GM12878 (cell line): ENCODE measurements at regions of chr22 and their contacts with region 1.

Region 1: GRCh38 chr22:41832553-41833368 is at the start of gene SREBF2:
- DNase-seq: peak; percentile 99
- ATAC-seq: peak; percentile 92
- H3K4me3 ChIP-seq: peak within 1 kb of the TSS; percentile 92
- H3K27ac ChIP-seq: peak within 1 kb of the TSS; percentile 95
- H3K4me1 ChIP-seq: peaks cover 12% of the 10 kb centered on the region
- H3K27me3 ChIP-seq: no peaks in the 10 kb centered on the region
- CTCF ChIP-seq: 0 out of 6 replicates have a peak, but pooled peaks of 1 of the 3 experiments have one; percentile 1
- EP300 ChIP-seq: peak; percentile 64 to 75
- POLR2A ChIP-seq: peak; percentile 94
- RAD21 ChIP-seq: no peak
- polyA plus RNA-seq, gene SREBF2: 2.4 to 3.6 TPM

Region 2: GRCh38 chr22:41800348-41801146 is 32.2 kb before region 1 on chr22 and contains the start of gene CCDC134:
- CTCF ChIA-PET with region 1: interaction called, 4 read pairs
- POLR2A ChIA-PET with region 1: interaction called, 26 read pairs
- RAD21 ChIA-PET with region 1: interaction called, 4 read pairs
- SMC1A ChIA-PET with region 1: interaction called, 7 read pairs
- in situ Hi-C with region 1: no loop called
- intact Hi-C with region 1: no loop called
- DNase-seq: peak; percentile 70
- ATAC-seq: peak; percentile 98
- H3K4me3 ChIP-seq: peak within 1 kb of the TSS; percentile 89
- H3K27ac ChIP-seq: peak within 1 kb of the TSS; percentile 82
- H3K4me1 ChIP-seq: peaks cover 19% of the 10 kb centered on the region
- H3K27me3 ChIP-seq: no peaks in the 10 kb centered on the region
- CTCF ChIP-seq: no peak
- EP300 ChIP-seq: no peak
- POLR2A ChIP-seq: peak; percentile 95
- RAD21 ChIP-seq: no peak
- polyA plus RNA-seq, gene CCDC134: 0.35 to 1.2 TPM

Region 3: DNA sequence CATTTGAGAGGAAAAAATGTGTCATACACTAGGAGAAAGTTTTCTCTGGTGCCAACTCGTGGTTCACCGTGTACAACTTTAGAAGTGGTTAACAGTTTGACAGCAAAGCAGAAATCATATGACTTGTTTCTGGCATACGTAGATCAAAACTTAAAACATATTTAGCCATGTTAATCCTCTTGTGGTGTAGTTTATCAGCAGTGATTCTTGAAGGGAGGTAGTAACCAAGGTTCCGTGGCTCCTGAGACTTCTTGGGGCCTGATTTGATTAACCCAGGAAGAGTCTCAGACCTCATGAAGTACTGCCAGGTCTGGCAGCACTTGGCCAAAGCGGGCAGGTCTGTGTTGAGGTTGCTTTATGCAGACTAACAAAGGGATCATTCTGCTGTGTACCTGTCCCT is 40.6 kb after region 1 on chr22:
- CTCF ChIA-PET with region 1: no interaction called
- POLR2A ChIA-PET with region 1: interaction called, 4 read pairs
- RAD21 ChIA-PET with region 1: interaction called, 3 read pairs
- SMC1A ChIA-PET with region 1: interaction called, 18 read pairs
- in situ Hi-C with region 1: no loop called
- intact Hi-C with region 1: no loop called
- DNase-seq: no peak
- ATAC-seq: peak; percentile 34
- H3K4me3 ChIP-seq: no peak overlapping the region
- H3K27ac ChIP-seq: no peak overlapping the region
- H3K4me1 ChIP-seq: no peaks in the 10 kb centered on the region
- H3K27me3 ChIP-seq: no peaks in the 10 kb centered on the region
- CTCF ChIP-seq: no peak
- EP300 ChIP-seq: no peak
- POLR2A ChIP-seq: no peak
- RAD21 ChIP-seq: no peak

Region 4: GRCh38 chr22:41902932-41903421 is 70.2 kb after region 1 on chr22:
- CTCF ChIA-PET with region 1: no interaction called
- POLR2A ChIA-PET with region 1: no interaction called
- RAD21 ChIA-PET with region 1: no interaction called
- SMC1A ChIA-PET with region 1: no interaction called
- in situ Hi-C with region 1: no loop called
- intact Hi-C with region 1: no loop called
- DNase-seq: no peak
- ATAC-seq: no peak
- H3K4me3 ChIP-seq: no peak overlapping the region
- H3K27ac ChIP-seq: no peak overlapping the region
- H3K4me1 ChIP-seq: peaks cover 4% of the 10 kb centered on the region
- H3K27me3 ChIP-seq: no peaks in the 10 kb centered on the region
- CTCF ChIP-seq: no peak
- EP300 ChIP-seq: no peak
- POLR2A ChIP-seq: peak; percentile 78
- RAD21 ChIP-seq: no peak

Region 5: GRCh38 chr22:41925655-41926460 is 93.1 kb after region 1 on chr22:
- CTCF ChIA-PET with region 1: interaction called, 7 read pairs
- POLR2A ChIA-PET with region 1: interaction called, 65 read pairs
- RAD21 ChIA-PET with region 1: interaction called, 7 read pairs
- SMC1A ChIA-PET with region 1: interaction called, 5 read pairs
- in situ Hi-C with region 1: no loop called
- intact Hi-C with region 1: loop called (anchors 5 kb)
- DNase-seq: no peak
- ATAC-seq: peak; percentile 59
- H3K4me3 ChIP-seq: peak overlapping the region; percentile 97
- H3K27ac ChIP-seq: peak overlapping the region; percentile 93
- H3K4me1 ChIP-seq: peaks cover 53% of the 10 kb centered on the region
- H3K27me3 ChIP-seq: no peaks in the 10 kb centered on the region
- CTCF ChIP-seq: peak; percentile 78 to 87 (median 79)
- EP300 ChIP-seq: no peak
- POLR2A ChIP-seq: peak; percentile 54; the same call in 1 of the 2 replicates
- RAD21 ChIP-seq: peak; percentile 50

Region 6: DNA sequence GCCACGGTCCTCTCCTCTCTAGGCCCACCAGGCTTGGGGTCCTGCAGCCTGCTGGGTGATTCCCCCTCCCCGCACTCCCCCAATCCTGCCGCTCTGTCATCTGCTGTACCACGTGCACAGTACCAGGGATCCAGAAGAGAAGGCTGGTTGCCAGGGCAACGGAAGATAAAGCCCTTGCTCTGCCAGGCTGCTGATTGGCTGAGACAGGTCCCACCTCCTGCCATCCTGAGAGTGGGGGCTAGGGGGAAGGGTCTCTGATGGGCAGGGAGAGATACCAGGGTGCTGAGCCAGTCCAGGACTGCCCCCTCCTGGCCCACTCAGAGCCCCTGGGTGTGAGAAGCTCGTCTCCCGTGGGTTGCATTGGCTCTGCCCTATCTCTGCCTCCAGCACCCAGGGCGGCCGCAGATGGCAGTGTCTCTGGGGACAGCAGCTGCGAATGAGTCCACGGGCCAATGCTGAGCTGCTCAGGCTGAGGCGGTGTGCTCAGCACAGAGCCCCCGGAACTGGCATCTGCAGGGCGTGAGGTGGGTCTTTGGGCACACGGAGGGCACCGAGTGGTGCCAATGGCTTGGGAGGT is 119.2 kb after region 1 on chr22 and contains the start of gene SMIM45:
- CTCF ChIA-PET with region 1: interaction called, 9 read pairs
- POLR2A ChIA-PET with region 1: interaction called, 16 read pairs
- RAD21 ChIA-PET with region 1: interaction called, 8 read pairs
- SMC1A ChIA-PET with region 1: interaction called, 10 read pairs
- in situ Hi-C with region 1: loop called (anchors 5 kb)
- intact Hi-C with region 1: no loop called
- DNase-seq: no peak
- ATAC-seq: peak; percentile 35
- H3K4me3 ChIP-seq: no peak within 1 kb of the TSS
- H3K27ac ChIP-seq: no peak within 1 kb of the TSS
- H3K4me1 ChIP-seq: peaks cover 41% of the 10 kb centered on the region
- H3K27me3 ChIP-seq: no peaks in the 10 kb centered on the region
- CTCF ChIP-seq: peak in 1 of 3 experiments; percentile 19; a peak in 2 of 6 replicates
- EP300 ChIP-seq: no peak
- POLR2A ChIP-seq: no peak
- RAD21 ChIP-seq: no peak